Endothelial cell of umbilical vein (primary cell): ENCODE measurements at regions of chr1 and their contacts with region 1.

Region 1: DNA sequence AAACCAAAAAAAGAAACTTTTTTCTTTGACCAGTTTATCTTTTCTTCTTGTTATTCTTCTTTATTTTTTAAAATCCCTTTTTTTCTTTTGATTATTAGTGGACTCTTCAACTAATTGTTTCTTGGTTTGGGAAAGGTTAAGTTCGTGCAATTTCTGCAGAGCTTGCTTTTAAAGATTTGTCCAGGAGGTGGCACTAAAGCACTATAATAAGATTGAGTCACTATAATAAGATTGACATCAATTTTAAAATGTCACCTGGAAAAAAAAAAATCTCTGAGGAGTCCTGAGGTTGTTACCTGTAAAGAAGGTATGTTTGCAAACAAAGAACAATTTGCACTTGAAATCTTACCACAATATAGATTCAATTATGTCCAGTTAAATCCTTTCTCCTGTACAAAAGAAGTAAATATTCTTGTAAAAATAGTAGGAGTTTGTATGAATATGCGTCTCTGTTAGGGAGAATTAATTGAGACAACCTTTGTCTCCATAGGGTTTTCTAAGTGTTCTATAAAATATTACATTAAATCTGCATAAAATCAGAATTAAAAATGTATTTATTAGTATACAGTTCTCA is 166.7 kb downstream of the ADGRL4 start:
- DNase-seq: peak; percentile 69
- H3K4me3 ChIP-seq: no peak overlapping the region
- H3K27ac ChIP-seq: no peak overlapping the region
- H3K4me1 ChIP-seq: peaks cover 2% of the 10 kb centered on the region
- H3K27me3 ChIP-seq: no peaks in the 10 kb centered on the region
- CTCF ChIP-seq: peak; percentile 38 to 42
- POLR2A ChIP-seq: no peak

Region 2: DNA sequence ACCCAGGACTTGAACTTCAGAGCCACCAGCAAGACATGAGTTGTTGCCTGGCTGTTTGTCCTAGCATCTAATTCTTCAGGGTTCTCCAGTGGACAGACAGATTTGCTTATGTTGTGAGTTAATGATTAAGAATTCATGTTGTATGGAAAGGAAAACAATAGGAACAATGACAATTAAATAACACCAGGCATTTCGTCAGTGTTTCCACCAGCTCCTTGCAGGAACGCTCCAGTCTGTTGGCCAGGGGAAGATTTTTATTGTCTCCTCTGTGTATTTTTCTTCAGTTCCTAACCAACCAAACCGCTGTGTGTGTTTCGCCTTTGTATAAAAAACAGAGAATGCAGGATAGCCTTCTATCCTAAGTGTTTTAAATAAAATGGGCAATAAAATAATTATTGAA is 413.4 kb before region 1 on chr1:
- CTCF ChIA-PET with region 1: no interaction called
- POLR2A ChIA-PET with region 1: no interaction called
- dilution Hi-C with region 1: no loop called
- intact Hi-C with region 1: no loop called
- DNase-seq: no peak
- H3K4me3 ChIP-seq: no peak overlapping the region
- H3K27ac ChIP-seq: no peak overlapping the region
- H3K4me1 ChIP-seq: no peaks in the 10 kb centered on the region
- H3K27me3 ChIP-seq: peaks cover 0 to 15% of the 10 kb centered on the region in 2 experiments
- CTCF ChIP-seq: no peak
- POLR2A ChIP-seq: no peak

Region 3: DNA sequence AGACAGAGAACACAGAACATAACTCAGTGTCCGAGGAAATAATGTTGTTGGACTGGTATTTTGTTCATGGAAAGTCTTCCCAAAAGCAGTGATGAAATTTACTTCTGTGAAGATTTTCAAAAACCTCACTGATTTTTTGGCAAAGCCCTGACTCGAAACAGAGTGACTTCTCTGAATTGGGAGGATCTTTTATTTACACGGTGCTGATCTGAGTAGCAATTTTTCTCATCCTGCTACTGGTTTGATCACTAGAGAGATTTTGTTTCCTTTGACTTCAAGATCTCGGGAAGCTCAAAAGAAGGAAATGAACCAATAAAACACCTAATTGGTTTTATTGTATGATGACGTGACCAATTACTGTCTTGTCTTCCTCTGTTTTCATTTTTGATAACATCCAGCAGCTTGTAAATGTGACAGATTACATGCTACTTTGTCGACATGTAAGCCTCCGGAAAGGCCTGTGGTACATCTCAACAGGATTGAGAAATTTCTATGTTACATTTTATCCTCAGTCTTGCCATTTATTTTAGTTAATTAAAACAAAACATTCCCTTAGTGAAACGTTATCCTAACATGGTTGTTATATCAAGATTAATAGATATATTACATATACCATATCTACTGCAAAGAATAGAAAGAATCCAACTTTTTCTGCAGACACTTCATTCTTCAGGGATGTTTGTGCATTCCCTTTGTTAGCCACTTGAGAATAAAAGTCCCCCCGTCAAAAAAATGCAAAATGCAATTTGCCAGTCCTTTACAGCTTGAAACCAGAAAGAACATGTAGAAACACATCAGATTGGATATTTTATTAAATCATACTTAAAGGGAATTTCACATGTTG is 262.3 kb before region 1 on chr1:
- CTCF ChIA-PET with region 1: no interaction called
- POLR2A ChIA-PET with region 1: no interaction called
- dilution Hi-C with region 1: no loop called
- intact Hi-C with region 1: no loop called
- DNase-seq: no peak
- H3K4me3 ChIP-seq: no peak overlapping the region
- H3K27ac ChIP-seq: no peak overlapping the region
- H3K4me1 ChIP-seq: no peaks in the 10 kb centered on the region
- H3K27me3 ChIP-seq: no peaks in the 10 kb centered on the region
- CTCF ChIP-seq: no peak
- POLR2A ChIP-seq: no peak

Region 4: DNA sequence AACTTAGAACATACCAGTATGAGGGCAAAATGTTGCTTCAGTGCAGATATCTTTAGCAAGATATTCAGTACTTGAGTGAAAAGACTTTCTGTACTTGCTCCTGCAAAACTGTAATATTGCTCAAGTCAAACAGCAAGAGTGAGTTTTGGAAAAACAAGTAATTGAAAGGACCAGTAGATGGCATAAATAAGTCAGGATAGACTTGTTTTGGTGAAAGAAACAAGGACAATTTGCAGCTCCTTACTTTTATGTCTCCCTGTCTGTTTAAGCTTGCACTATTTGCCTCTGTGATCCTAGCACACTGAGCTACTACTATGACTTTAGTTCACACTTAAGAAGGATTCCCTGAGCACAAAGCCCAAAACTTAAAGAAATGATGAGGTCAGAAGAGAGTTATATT is 151.1 kb before region 1 on chr1:
- CTCF ChIA-PET with region 1: interaction called, 38 read pairs
- POLR2A ChIA-PET with region 1: no interaction called
- dilution Hi-C with region 1: no loop called
- intact Hi-C with region 1: no loop called
- DNase-seq: peak; percentile 56
- H3K4me3 ChIP-seq: no peak overlapping the region
- H3K27ac ChIP-seq: no peak overlapping the region
- H3K4me1 ChIP-seq: peaks cover 2% of the 10 kb centered on the region
- H3K27me3 ChIP-seq: no peaks in the 10 kb centered on the region
- CTCF ChIP-seq: no peak
- POLR2A ChIP-seq: no peak

Region 5: DNA sequence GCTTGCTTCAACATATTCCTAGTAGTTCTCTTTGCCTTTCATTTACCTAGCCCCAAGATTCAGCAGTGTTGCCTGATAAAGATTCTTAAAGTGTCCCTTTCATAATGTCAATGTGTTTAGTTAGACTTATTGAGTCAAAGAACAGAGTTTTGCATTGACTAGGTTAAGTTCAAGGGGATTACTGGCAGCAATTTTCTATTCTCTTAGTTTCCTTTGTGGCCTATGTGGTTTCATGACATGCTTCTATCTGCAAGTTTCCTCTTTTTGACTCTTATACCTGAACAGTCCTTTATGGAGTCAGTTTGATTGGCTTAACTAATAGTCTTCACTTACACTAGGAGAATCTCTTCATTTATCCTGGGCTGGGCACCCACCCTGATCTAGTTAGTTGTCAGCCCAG is 15.5 kb after region 1 on chr1:
- CTCF ChIA-PET with region 1: interaction called, 17 read pairs
- POLR2A ChIA-PET with region 1: no interaction called
- dilution Hi-C with region 1: no loop called
- intact Hi-C with region 1: no loop called
- DNase-seq: no peak
- H3K4me3 ChIP-seq: no peak overlapping the region
- H3K27ac ChIP-seq: no peak overlapping the region
- H3K4me1 ChIP-seq: no peaks in the 10 kb centered on the region
- H3K27me3 ChIP-seq: no peaks in the 10 kb centered on the region
- CTCF ChIP-seq: no peak
- POLR2A ChIP-seq: no peak

Region 6: GRCh38 chr1:78871249-78871648 is 31.5 kb after region 1 on chr1:
- CTCF ChIA-PET with region 1: no interaction called
- POLR2A ChIA-PET with region 1: no interaction called
- dilution Hi-C with region 1: no loop called
- intact Hi-C with region 1: no loop called
- DNase-seq: no peak
- H3K4me3 ChIP-seq: no peak overlapping the region
- H3K27ac ChIP-seq: no peak overlapping the region
- H3K4me1 ChIP-seq: no peaks in the 10 kb centered on the region
- H3K27me3 ChIP-seq: no peaks in the 10 kb centered on the region
- CTCF ChIP-seq: no peak
- POLR2A ChIP-seq: no peak

Region 7: GRCh38 chr1:79193211-79194079 is 353.7 kb after region 1 on chr1:
- CTCF ChIA-PET with region 1: interaction called, 186 read pairs
- POLR2A ChIA-PET with region 1: no interaction called
- dilution Hi-C with region 1: no loop called
- intact Hi-C with region 1: no loop called
- DNase-seq: peak; percentile 92
- H3K4me3 ChIP-seq: peak overlapping the region in 1 of 3 experiments; percentile 3
- H3K27ac ChIP-seq: peak overlapping the region; percentile 96
- H3K4me1 ChIP-seq: peaks cover 38% of the 10 kb centered on the region
- H3K27me3 ChIP-seq: no peaks in the 10 kb centered on the region
- CTCF ChIP-seq: no peak
- POLR2A ChIP-seq: no peak

Region 8: DNA sequence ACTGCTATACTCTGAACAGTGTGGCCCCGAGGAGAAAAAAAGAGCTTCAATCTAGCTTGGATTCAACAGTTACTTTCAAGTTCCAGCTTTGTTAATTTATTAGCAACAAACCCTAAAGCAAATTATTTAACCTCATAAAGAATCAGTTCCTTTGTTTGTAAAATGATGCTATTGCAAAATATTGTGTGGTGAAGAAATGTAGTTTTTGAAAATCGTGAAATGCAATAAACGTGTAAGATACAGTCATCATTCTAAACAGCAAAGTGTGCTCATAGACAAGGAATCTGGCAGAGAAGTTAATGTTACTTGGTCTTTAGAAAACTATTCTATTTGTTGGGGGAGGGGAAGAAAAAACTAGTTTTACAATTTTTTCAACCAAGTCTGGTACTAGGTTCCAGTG is 464.3 kb after region 1 on chr1:
- CTCF ChIA-PET with region 1: no interaction called
- POLR2A ChIA-PET with region 1: no interaction called
- dilution Hi-C with region 1: no loop called
- intact Hi-C with region 1: no loop called
- DNase-seq: no peak
- H3K4me3 ChIP-seq: no peak overlapping the region
- H3K27ac ChIP-seq: no peak overlapping the region
- H3K4me1 ChIP-seq: no peaks in the 10 kb centered on the region
- H3K27me3 ChIP-seq: no peaks in the 10 kb centered on the region
- CTCF ChIP-seq: no peak
- POLR2A ChIP-seq: no peak

Region 9: GRCh38 chr1:79353224-79353623 is 513.4 kb after region 1 on chr1:
- CTCF ChIA-PET with region 1: interaction called, 94 read pairs
- POLR2A ChIA-PET with region 1: no interaction called
- dilution Hi-C with region 1: no loop called
- intact Hi-C with region 1: loop called (anchors 1 kb)
- DNase-seq: peak; percentile 67
- H3K4me3 ChIP-seq: no peak overlapping the region
- H3K27ac ChIP-seq: no peak overlapping the region
- H3K4me1 ChIP-seq: no peaks in the 10 kb centered on the region
- H3K27me3 ChIP-seq: no peaks in the 10 kb centered on the region
- CTCF ChIP-seq: peak; percentile 42 to 47
- POLR2A ChIP-seq: no peak

Region 10: DNA sequence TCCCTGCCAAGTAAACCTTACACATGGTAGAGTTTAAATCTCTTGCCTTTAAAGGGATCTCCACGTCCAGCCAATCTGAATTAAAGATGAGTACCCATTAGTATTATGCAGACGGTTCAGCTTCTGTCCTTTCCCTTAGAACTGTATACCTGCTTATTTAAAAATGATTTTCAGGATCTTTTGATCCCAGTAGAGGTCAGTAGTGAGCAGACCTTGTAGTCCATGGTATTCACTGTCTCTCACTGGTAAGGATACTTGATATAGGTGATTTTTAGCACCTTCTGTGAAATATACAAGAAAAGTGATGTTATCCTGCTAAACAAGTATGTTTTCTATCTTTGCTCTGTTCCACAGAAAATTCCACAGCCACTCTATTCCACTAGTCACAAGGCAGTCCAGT is 1378.3 kb after region 1 on chr1:
- CTCF ChIA-PET with region 1: interaction called, 7 read pairs
- POLR2A ChIA-PET with region 1: no interaction called
- dilution Hi-C with region 1: no loop called
- intact Hi-C with region 1: loop called (anchors 1 kb)
- DNase-seq: peak; percentile 51
- H3K4me3 ChIP-seq: no peak overlapping the region
- H3K27ac ChIP-seq: no peak overlapping the region
- H3K4me1 ChIP-seq: no peaks in the 10 kb centered on the region
- H3K27me3 ChIP-seq: no peaks in the 10 kb centered on the region
- CTCF ChIP-seq: peak; percentile 30 to 43
- POLR2A ChIP-seq: no peak